CD4-positive, alpha-beta memory T cell (primary cell): ENCODE measurements at regions of chr15 and their contacts with region 1.

Region 1: DNA sequence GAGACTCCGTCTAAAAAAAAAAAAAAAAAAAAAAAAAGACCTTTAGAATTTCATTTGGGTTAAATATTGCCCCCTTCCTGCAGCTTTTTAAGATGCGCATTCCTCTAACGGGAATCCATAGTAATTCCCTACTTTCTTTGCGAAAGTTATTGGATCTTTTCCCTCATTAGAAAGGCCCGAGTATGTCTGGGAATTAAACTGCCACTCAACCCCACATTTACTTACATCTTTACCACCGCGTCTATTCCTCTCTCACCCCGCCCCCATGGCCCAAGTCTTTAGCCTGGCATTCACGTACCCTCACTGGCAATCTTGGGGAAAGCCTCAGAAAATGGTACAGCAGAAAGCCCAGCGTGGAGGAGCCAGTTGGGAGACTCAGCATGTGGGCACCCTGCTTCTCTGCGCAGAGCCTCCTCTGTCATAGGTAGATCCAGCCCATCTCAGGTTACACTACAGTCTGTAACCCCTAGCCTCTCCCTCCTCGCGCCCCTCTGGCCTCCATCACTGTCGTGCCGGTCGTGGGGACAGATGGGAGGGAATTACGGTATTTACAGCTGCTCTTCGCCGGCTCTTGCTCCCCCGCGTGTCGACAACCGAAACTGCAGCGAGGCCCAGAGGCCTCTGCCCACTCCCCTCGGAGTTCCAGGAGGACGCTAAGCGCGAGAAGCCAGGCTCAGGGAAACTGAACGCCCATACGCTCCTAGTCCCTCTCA is 6.4 kb upstream of the ANKDD1A start:
- DNase-seq: peak; percentile 72 to 76 (median 74)
- H3K4me3 ChIP-seq: peak overlapping the region in 1 of 2 donors; percentile 12
- H3K4me3 Mint-ChIP-seq: peak overlapping the region in 7 of 8 donors; percentile 51 to 79 (median 76)
- H3K27ac ChIP-seq: no peak overlapping the region
- H3K27ac Mint-ChIP-seq: peak overlapping the region; percentile 20 to 84 (median 52)
- H3K4me1 ChIP-seq: peaks cover 39% of the 10 kb centered on the region
- H3K4me1 Mint-ChIP-seq: peaks cover 30 to 47% (median 39%) of the 10 kb centered on the region in 4 donors
- H3K27me3 ChIP-seq: no peaks in the 10 kb centered on the region
- H3K27me3 Mint-ChIP-seq: peaks cover 0 to 3% of the 10 kb centered on the region in 2 donors

Region 2: GRCh38 chr15:64693134-64693533 is 212.1 kb before region 1 on chr15:
- CTCF ChIA-PET with region 1: no interaction called
- POLR2A ChIA-PET with region 1: no interaction called
- intact Hi-C with region 1: no loop called
- DNase-seq: no peak
- H3K4me3 ChIP-seq: no peak overlapping the region
- H3K4me3 Mint-ChIP-seq: no peak overlapping the region
- H3K27ac ChIP-seq: no peak overlapping the region
- H3K27ac Mint-ChIP-seq: peak overlapping the region in 3 of 7 donors; percentile 53 to 87 (median 59)
- H3K4me1 ChIP-seq: peaks cover 11% of the 10 kb centered on the region
- H3K4me1 Mint-ChIP-seq: peaks cover 6 to 22% (median 19%) of the 10 kb centered on the region in 4 donors
- H3K27me3 ChIP-seq: no peaks in the 10 kb centered on the region
- H3K27me3 Mint-ChIP-seq: no peaks in the 10 kb centered on the region

Region 3: GRCh38 chr15:64809649-64810496 is 95.4 kb before region 1 on chr15:
- CTCF ChIA-PET with region 1: interaction called, 27 read pairs
- POLR2A ChIA-PET with region 1: no interaction called
- intact Hi-C with region 1: loop called (anchors 1 kb)
- DNase-seq: peak; percentile 42 to 58 (median 54)
- H3K4me3 ChIP-seq: no peak overlapping the region
- H3K4me3 Mint-ChIP-seq: no peak overlapping the region
- H3K27ac ChIP-seq: no peak overlapping the region
- H3K27ac Mint-ChIP-seq: peak overlapping the region in 3 of 7 donors; percentile 18 to 68 (median 43)
- H3K4me1 ChIP-seq: peaks cover 5% of the 10 kb centered on the region
- H3K4me1 Mint-ChIP-seq: peaks cover 0 to 5% (median 2%) of the 10 kb centered on the region in 4 donors
- H3K27me3 ChIP-seq: no peaks in the 10 kb centered on the region
- H3K27me3 Mint-ChIP-seq: no peaks in the 10 kb centered on the region

Region 4: DNA sequence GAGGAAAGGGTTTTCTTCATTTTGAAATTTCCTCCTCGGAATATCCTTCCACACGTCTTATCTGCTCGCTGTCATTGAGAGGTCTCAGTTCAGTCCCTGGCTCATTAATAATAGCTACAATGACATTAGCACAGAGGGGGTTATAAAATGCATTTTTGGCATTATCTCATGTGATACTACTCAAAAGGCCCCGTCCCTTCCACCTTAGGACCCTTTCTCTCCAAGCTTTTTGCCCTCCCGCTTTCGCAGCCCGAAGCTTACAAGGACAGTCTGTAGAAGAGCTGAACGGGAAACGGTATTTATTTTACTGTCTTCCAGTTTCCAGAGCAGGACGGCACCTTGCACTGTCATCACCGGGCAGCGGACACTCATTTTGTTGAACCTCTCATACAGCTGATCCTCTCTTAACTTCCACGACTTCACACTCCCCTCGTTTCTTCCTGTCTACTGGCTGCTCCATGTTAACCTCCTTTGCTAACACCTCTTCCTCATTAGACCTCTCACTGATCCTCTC is 69.2 kb before region 1 on chr15:
- CTCF ChIA-PET with region 1: interaction called, 40 read pairs
- POLR2A ChIA-PET with region 1: interaction called, 6 read pairs
- intact Hi-C with region 1: loop called (anchors 1 kb)
- DNase-seq: no peak
- H3K4me3 ChIP-seq: peak overlapping the region in 1 of 2 donors; percentile 23
- H3K4me3 Mint-ChIP-seq: peak overlapping the region; percentile 49 to 79 (median 65)
- H3K27ac ChIP-seq: no peak overlapping the region
- H3K27ac Mint-ChIP-seq: peak overlapping the region; percentile 40 to 88 (median 80)
- H3K4me1 ChIP-seq: peaks cover 60% of the 10 kb centered on the region
- H3K4me1 Mint-ChIP-seq: peaks cover 37 to 54% (median 44%) of the 10 kb centered on the region in 4 donors
- H3K27me3 ChIP-seq: no peaks in the 10 kb centered on the region
- H3K27me3 Mint-ChIP-seq: no peaks in the 10 kb centered on the region

Region 5: DNA sequence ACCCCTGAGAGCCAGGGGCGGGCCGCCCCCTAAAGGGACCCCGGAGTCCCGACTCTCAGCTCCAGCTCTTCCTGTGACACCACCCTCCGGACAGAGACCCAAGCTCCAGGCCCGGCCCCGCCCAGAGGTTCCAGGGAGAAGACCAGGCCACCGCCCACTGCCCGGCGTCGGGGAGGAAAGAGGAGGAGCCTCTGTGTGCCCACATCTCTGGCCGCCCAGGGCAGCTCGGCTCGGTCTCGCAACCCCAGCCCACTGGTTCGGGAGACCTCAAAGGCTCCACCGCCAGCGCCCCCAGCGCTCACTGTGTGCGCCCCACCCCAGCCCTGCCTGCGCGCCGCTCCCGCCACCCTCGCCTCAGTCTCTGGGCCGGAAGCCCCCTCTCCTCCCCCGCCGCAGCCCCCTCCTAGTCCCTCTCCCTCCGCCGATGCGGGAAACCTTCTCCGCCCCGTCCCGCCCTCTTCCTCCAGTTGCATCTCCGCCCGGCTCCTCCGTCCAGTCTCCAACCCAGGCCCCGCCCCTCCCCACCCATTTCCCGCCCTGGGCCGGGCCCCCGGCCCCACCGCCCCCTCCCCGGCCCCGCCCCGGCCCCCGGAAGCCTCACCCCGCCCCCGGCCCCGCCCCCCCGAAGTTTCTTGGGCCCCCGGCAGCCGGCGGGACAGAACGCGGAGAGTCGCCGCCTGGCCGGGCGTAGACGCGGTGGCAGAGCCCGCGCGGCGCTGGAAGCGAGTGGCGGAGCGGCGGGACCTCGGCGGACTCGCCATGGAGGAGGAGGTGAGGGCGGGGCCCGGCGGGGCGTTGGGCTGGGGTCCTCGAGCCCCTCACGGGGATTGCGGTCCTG is 63.8 kb before region 1 on chr15 and contains the start of gene PLEKHO2:
- CTCF ChIA-PET with region 1: interaction called, 40 read pairs
- POLR2A ChIA-PET with region 1: interaction called, 6 read pairs
- intact Hi-C with region 1: loop called (anchors 1 kb)
- DNase-seq: peak; percentile 83 to 95 (median 87)
- H3K4me3 ChIP-seq: peak within 1 kb of the TSS; percentile 81 to 88
- H3K4me3 Mint-ChIP-seq: peak within 1 kb of the TSS; percentile 85 to 99 (median 98)
- H3K27ac ChIP-seq: peak within 1 kb of the TSS; percentile 84
- H3K27ac Mint-ChIP-seq: peak within 1 kb of the TSS; percentile 78 to 99 (median 97)
- H3K4me1 ChIP-seq: peaks cover 90% of the 10 kb centered on the region
- H3K4me1 Mint-ChIP-seq: peaks cover 55 to 86% (median 70%) of the 10 kb centered on the region in 4 donors
- H3K27me3 ChIP-seq: no peaks in the 10 kb centered on the region
- H3K27me3 Mint-ChIP-seq: no peaks in the 10 kb centered on the region
- total RNA-seq, gene PLEKHO2: 22.7 to 24.1 TPM

Region 6: DNA sequence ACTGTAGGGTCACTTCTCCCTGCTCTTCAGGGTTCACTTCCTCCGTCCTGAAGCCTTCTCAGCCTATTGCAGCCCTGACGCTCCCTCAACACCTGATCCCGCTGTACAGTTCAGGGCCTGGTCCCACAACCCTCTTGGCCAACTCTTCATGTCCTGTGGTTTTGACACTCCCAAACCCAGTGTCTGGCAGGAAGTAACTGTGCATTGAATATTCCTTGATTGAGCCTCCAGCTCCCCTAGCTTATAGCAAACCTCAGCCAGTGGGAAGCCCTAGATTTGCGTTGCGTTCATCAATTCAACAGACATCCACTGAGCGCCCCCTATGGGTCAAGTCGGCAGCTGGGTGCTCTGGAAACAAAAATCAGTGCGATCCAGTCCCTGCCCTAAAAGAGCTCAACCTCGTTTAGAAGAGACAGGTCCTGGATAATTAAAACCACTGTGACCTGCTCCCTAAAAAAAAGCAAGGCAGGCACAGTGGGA is 196.2 kb after region 1 on chr15:
- CTCF ChIA-PET with region 1: no interaction called
- POLR2A ChIA-PET with region 1: no interaction called
- intact Hi-C with region 1: no loop called
- DNase-seq: peak in 3 of 5 donors; percentile 21 to 30 (median 28)
- H3K4me3 ChIP-seq: no peak overlapping the region
- H3K4me3 Mint-ChIP-seq: no peak overlapping the region
- H3K27ac ChIP-seq: no peak overlapping the region
- H3K27ac Mint-ChIP-seq: no peak overlapping the region
- H3K4me1 ChIP-seq: no peaks in the 10 kb centered on the region
- H3K4me1 Mint-ChIP-seq: peaks cover 0 to 5% (median 4%) of the 10 kb centered on the region in 4 donors
- H3K27me3 ChIP-seq: no peaks in the 10 kb centered on the region
- H3K27me3 Mint-ChIP-seq: no peaks in the 10 kb centered on the region